Posterior vena cava (tissue), 2 donors: ENCODE measurements at regions of chr1 and their contacts with region 1.

Region 1: GRCh38 chr1:229893762-229894444 is 173.1 kb upstream of the GALNT2 start:
- DNase-seq: no peak

Region 2: GRCh38 chr1:229370601-229371021 is 523.3 kb before region 1 on chr1:
- intact Hi-C with region 1: loop called in 1 of 2 experiments (anchors 10 kb)
- DNase-seq: no peak